ENCODE measurements at regions of chr11 and their contacts with region 1.

Region 1: DNA sequence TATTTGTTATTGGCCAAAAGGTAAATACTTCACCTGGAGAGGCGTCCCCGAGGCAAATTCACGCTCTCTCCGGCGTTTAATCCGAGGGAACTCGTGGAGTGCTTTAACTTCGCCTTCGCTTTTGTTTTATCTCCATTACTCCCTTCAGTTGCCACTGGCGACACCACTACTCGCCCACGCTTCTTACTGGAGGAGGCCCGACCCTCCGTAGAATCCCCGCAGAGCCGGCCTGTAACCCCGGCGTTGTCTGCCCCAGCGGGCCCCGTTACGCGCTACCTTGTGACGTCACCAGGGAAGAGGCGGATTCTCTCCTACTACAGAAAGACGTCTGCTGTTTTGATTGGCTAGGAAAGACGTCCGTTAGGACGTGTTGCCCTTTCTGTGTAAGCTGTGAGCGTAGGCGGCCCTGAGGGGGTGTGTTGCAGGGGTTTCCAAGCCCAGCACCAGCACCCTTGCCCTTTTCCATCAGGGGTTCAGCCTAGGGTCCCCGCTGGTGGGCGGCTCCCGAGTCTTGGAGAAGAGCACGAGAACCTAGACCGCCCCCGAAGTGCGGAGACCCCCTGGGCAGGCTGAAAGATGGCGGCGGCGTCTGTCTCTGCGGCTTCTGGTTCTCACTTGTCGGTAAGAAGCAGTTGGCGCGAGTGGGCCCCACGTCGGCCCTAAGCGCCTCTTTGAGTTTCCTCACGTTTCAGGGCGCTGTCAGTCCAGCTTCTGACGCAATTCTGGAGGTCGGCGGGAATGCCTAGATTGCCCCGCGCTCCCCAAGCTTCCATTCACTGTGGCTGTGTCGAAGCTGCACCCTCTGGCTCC is at the start of gene CEP57:
- DNase-seq: peak; percentile 90

Region 2: DNA sequence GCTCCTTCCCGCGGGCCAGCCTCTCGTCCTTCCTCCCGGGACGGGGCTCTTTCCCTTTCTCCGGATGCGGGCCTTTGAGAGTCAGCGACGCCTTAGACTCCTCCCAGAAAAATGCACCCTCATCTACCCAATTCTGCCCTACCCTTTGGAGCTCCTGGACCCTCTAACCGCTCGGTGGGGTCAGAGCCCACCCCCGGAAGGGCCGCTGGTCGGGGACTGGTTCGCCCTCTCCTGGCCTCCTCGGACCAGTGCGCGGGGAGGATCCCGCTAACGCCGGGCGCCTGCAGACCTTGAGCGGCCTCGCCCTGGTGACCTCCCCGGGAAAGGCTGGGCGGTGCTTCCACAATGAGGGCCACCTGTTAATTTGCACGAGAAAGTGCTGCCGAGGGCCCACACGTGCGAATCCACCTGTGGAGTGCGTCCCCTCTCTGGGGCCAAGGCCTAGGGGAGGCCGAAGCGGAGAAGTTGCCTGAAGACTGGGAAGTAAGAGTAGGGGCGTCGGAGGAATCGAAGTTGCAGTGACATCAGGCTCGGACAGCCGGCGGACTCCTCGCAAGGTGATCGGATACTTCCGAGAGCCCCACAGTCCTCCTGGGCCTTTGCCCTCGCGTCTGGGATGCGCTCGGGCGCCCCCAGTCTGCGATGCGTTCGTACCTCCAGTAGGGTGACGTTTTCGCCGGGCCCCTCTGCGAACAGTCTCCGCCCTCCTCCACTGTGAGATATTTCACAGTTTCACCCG is 639.2 kb before region 1 on chr11:
- CTCF ChIA-PET with region 1: interaction called, 3 read pairs
- POLR2A ChIA-PET with region 1: interaction called, 11 read pairs
- DNase-seq: peak; percentile 85

Region 3: GRCh38 chr11:95778699-95779098 is 11.6 kb before region 1 on chr11:
- CTCF ChIA-PET with region 1: no interaction called
- POLR2A ChIA-PET with region 1: interaction called, 11 read pairs
- DNase-seq: no peak

Region 4: GRCh38 chr11:96389720-96390487 is 599.6 kb after region 1 on chr11 and contains the starts of genes CCDC82 and JRKL:
- CTCF ChIA-PET with region 1: interaction called, 8 read pairs
- POLR2A ChIA-PET with region 1: interaction called, 22 read pairs
- DNase-seq: peak; percentile 96